ENCODE measurements at regions of chr11 and their contacts with region 1.

Region 1: GRCh38 chr11:59186130-59186594 is 14.2 kb downstream of the DTX4 start:
- DNase-seq: peak; percentile 55
- H3K4me3 Mint-ChIP-seq: no peak overlapping the region
- H3K27ac Mint-ChIP-seq: no peak overlapping the region
- H3K4me1 Mint-ChIP-seq: no peaks in the 10 kb centered on the region
- H3K27me3 Mint-ChIP-seq: peaks cover 1% of the 10 kb centered on the region

Region 2: DNA sequence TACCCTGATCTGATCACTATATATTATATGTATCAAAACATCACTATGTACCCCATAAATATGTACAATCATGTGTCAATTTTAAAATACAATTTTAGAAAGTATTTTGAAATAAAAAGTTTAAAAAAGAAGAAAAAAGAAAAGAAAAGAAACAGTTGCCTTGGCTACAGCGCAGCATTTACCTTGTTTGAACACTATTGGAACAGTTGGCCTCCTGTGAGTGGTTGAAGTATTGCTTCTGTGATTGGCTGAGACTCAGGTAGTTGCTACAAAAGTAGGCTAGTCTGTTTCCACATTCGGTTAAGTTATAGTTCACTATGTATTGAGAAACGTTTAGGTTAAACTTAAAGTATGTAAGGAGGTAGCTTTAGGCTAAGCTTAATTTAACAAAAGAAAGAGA is 22.1 kb before region 1 on chr11:
- CTCF ChIA-PET with region 1: interaction called, 16 read pairs
- POLR2A ChIA-PET with region 1: interaction called, 3 read pairs
- DNase-seq: no peak
- H3K4me3 Mint-ChIP-seq: no peak overlapping the region
- H3K27ac Mint-ChIP-seq: no peak overlapping the region
- H3K4me1 Mint-ChIP-seq: no peaks in the 10 kb centered on the region
- H3K27me3 Mint-ChIP-seq: peaks cover 25% of the 10 kb centered on the region

Region 3: GRCh38 chr11:59199546-59200422 is 13.6 kb after region 1 on chr11:
- CTCF ChIA-PET with region 1: interaction called, 28 read pairs
- POLR2A ChIA-PET with region 1: no interaction called
- DNase-seq: no peak
- H3K4me3 Mint-ChIP-seq: no peak overlapping the region
- H3K27ac Mint-ChIP-seq: no peak overlapping the region
- H3K4me1 Mint-ChIP-seq: peaks cover 4% of the 10 kb centered on the region
- H3K27me3 Mint-ChIP-seq: no peaks in the 10 kb centered on the region